AG04449 (cell line): ENCODE measurements at regions of chr16 and their contacts with region 1.

Region 1: DNA sequence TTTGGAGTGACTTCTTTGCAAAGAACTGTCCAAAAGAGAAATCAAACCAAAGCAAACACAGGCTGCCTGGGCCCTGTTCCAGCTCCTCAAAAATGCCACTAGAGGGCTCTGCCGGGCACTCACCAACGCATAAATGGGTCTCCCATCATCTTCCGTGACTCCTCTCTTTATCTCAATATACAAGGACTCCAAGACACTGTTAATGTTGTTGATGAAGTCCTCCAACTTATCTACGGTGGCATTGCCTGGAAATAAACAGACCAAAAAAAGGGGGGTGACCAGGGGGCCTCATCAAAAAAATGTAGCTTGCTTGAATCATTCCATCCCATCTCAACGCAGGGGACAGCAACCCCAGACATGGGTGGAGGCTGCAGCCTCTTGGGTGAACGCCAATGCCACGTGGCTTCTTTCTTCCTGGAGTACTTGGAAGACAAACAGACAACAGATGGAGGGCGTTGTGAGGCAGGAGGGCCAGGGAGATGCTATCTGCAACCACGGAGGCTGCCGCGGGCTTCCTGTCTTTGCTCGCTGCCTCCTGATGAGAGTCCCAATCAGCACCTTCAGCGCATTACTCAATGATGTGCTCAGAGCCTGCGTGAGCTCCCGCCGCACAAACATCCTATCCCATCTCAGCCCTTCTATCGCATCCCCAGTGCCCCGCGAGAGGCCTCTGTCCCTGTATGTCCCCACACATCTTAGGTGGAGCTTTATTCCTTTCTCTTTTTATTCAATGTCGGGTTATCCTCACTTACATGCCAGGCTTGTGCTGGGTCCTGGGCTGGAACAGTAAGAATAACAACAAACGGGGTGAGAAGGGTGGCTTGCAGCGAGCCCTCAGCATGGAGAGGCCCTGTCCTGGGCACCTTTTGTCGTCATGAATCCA is 32.0 kb downstream of the KDM8 start:
- DNase-seq: peak; percentile 41
- H3K4me3 ChIP-seq: no peak overlapping the region; the same call in 1 of the 2 replicates
- CTCF ChIP-seq: peak; percentile 82

Region 2: DNA sequence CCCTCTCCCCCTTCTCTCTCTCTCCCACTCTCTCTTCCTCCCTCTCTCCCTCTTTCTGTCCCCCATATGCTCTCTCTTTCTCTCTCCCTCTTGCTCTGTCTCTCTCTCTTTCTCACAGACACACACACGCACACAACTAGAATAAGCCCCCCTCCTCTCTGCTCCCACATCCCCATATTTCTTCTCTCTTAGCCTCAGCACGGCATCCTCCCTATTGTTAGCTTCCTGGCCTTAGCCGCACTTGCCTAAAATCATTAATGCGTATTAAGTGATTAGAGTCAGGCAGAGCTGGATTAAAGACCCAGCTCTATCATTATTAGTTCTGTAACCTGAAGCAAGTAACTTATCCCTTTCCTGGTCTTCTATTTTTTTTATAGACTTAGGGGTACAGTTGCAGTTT is 487.5 kb before region 1 on chr16:
- CTCF ChIA-PET with region 1: no interaction called
- POLR2A ChIA-PET with region 1: no interaction called
- DNase-seq: no peak
- H3K4me3 ChIP-seq: no peak overlapping the region
- CTCF ChIP-seq: no peak

Region 3: GRCh38 chr16:27040732-27041131 is 194.6 kb before region 1 on chr16:
- CTCF ChIA-PET with region 1: no interaction called
- POLR2A ChIA-PET with region 1: no interaction called
- DNase-seq: no peak
- H3K4me3 ChIP-seq: no peak overlapping the region
- CTCF ChIP-seq: no peak

Region 4: GRCh38 chr16:27251541-27252205 is 16.4 kb after region 1 on chr16:
- CTCF ChIA-PET with region 1: interaction called, 35 read pairs
- POLR2A ChIA-PET with region 1: interaction called, 3 read pairs
- DNase-seq: no peak
- H3K4me3 ChIP-seq: no peak overlapping the region
- CTCF ChIP-seq: no peak

Region 5: DNA sequence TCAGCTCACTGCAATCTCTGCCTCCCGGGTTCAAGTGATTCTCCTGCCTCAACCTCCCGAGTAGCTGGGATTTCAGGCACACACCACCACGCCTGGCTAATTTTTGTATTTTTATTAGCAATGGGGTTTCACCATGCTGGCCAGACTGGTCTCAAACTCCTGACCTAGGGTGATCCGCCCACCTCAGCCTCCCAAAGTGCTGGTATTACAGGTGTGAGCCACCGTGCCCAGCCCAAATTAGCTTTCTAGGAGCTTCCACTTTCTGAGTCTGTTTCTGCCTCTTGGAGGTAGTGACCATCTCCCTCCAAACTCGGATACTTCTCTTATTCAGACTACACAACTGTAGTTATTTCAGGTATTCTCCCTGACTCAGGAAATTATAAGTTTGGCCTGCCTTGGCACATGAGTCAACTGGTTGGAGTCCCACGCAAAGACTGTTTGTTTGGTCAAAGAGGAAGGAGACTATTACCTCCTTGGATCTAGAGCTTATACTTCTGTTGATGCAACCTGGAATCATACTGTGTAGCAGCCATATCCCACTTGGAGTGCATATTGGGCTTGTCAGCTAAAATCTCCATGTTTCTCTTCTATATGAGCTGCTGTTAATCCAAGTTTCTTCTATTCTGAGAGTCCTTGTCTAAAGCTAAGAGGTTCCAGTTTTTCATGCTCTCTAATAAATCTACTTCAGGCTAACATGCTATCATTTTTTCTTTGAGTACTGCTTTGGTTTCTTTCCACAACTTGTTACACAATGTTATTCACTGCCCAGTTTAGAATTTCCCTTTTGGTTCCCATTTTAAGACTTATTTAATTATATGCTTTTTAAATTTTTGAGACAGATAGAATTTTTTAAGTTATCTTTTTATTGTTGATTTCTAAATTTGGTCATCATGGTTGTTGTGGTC is 86.0 kb after region 1 on chr16:
- CTCF ChIA-PET with region 1: interaction called, 17 read pairs
- POLR2A ChIA-PET with region 1: no interaction called
- DNase-seq: no peak
- H3K4me3 ChIP-seq: no peak overlapping the region
- CTCF ChIP-seq: no peak

Region 6: DNA sequence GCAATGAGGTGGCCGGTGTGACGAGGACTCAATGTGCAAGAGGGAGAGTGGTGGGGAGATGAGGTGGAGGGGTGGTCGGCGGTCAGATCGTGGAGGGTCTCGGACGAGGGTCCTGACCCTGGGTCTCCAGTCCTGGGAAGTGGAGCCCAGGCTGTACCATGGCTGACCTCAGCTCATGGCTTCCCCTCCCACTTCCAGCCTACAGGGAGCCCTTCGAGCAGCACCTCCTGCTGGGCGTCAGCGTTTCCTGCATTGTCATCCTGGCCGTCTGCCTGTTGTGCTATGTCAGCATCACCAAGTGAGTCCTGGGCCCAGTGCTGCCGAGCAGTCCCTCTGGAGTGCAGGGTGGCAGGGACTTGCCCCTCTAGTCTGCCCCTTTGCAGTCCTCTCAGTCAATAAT is 120.3 kb after region 1 on chr16:
- CTCF ChIA-PET with region 1: interaction called, 22 read pairs
- POLR2A ChIA-PET with region 1: no interaction called
- DNase-seq: no peak
- H3K4me3 ChIP-seq: no peak overlapping the region
- CTCF ChIP-seq: peak; percentile 40

Region 7: DNA sequence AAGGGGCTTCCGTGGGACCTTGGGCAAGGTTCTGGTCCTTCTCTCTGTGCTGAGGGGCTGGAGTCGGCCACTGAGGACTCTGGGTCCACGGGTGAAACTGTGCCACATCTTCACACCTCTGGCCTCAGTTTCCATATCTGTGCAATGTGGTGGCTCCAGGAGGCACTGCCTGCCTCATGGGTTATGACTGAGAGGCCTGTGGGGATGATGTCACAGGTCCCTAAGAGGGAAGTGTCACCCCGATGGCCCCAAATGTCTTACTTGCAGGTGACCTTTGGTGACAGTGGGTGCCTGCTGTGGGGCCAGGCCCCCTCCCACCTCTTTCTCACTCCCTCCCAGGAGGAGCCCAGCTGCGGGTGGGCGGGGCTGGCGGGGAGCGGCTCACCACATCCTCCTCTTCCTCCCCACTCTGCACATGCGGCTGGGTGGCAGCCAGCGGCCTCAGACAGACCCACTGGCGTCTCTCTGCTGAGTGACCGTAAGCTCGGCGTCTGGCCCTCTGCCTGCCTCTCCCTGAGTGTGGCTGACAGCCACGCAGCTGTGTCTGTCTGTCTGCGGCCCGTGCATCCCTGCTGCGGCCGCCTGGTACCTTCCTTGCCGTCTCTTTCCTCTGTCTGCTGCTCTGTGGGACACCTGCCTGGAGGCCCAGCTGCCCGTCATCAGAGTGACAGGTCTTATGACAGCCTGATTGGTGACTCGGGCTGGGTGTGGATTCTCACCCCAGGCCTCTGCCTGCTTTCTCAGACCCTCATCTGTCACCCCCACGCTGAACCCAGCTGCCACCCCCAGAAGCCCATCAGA is 166.7 kb after region 1 on chr16 and contains the start of gene IL21R:
- CTCF ChIA-PET with region 1: interaction called, 18 read pairs
- POLR2A ChIA-PET with region 1: no interaction called
- DNase-seq: no peak
- H3K4me3 ChIP-seq: no peak within 1 kb of the TSS
- CTCF ChIP-seq: no peak